WTC11 (cell line): ENCODE measurements at regions of chr16 and their contacts with region 1.

Region 1: GRCh38 chr16:69186642-69187445 is at the start of gene SNTB2:
- DNase-seq: peak; percentile 95
- ATAC-seq: peak; percentile 94
- H3K4me3 Mint-ChIP-seq: peak within 1 kb of the TSS; percentile 93
- H3K27ac Mint-ChIP-seq: peak within 1 kb of the TSS; percentile 91
- H3K4me1 Mint-ChIP-seq: peaks cover 24% of the 10 kb centered on the region
- H3K27me3 Mint-ChIP-seq: no peaks in the 10 kb centered on the region
- CTCF ChIP-seq: no peak
- total RNA-seq, gene SNTB2: 21.0 to 23.7 TPM (median 23.7 TPM) in 3 replicates

Region 2: GRCh38 chr16:69150146-69150865 is 36.5 kb before region 1 on chr16:
- CTCF ChIA-PET with region 1: interaction called, 18 read pairs
- POLR2A ChIA-PET with region 1: interaction called, 3 read pairs
- DNase-seq: peak; percentile 56
- ATAC-seq: peak; percentile 87
- H3K4me3 Mint-ChIP-seq: no peak overlapping the region
- H3K27ac Mint-ChIP-seq: peak overlapping the region; percentile 24; the same call in 1 of the 2 replicates
- H3K4me1 Mint-ChIP-seq: no peaks in the 10 kb centered on the region
- H3K27me3 Mint-ChIP-seq: no peaks in the 10 kb centered on the region
- CTCF ChIP-seq: peak; percentile 48

Region 3: DNA sequence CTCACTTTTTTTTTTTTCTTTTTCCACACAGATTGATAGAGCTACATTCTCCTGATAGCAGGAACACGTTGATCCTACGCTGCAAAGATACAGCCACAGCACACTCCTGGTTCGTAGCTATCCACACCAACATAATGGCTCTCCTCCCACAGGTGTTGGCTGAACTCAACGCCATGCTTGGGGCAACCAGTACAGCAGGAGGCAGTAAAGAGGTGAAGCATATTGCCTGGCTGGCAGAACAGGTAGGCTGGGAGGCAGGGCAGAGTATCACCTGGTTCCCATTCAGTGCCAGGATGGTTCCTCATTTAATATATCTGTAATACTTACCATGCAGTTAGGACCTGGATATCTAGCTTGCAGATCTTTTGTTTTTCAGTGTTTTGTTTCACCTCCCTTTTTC is 73.2 kb after region 1 on chr16:
- CTCF ChIA-PET with region 1: no interaction called
- POLR2A ChIA-PET with region 1: no interaction called
- DNase-seq: peak; percentile 23
- ATAC-seq: peak; percentile 69
- H3K4me3 Mint-ChIP-seq: no peak overlapping the region
- H3K27ac Mint-ChIP-seq: peak overlapping the region; percentile 59
- H3K4me1 Mint-ChIP-seq: no peaks in the 10 kb centered on the region
- H3K27me3 Mint-ChIP-seq: no peaks in the 10 kb centered on the region
- CTCF ChIP-seq: no peak